GM12878 (cell line): ENCODE measurements at regions of chr20 and their contacts with region 1.

Region 1: GRCh38 chr20:18639501-18639979 is 51.7 kb downstream of the DTD1 start:
- DNase-seq: no peak
- ATAC-seq: peak; percentile 71
- H3K4me3 ChIP-seq: peak overlapping the region; percentile 59
- H3K27ac ChIP-seq: peak overlapping the region; percentile 6; the same call in 1 of the 2 replicates
- H3K4me1 ChIP-seq: peaks cover 9% of the 10 kb centered on the region
- H3K27me3 ChIP-seq: no peaks in the 10 kb centered on the region
- CTCF ChIP-seq: no peak
- EP300 ChIP-seq: no peak
- POLR2A ChIP-seq: no peak
- RAD21 ChIP-seq: no peak

Region 2: GRCh38 chr20:18793625-18794427 is 154.3 kb after region 1 on chr20:
- CTCF ChIA-PET with region 1: interaction called, 7 read pairs
- POLR2A ChIA-PET with region 1: interaction called, 4 read pairs
- RAD21 ChIA-PET with region 1: interaction called, 4 read pairs
- SMC1A ChIA-PET with region 1: interaction called, 8 read pairs
- in situ Hi-C with region 1: no loop called
- intact Hi-C with region 1: loop called (anchors 5 kb)
- DNase-seq: peak; percentile 84
- ATAC-seq: peak; percentile 96
- H3K4me3 ChIP-seq: peak overlapping the region; percentile 68
- H3K27ac ChIP-seq: peak overlapping the region; percentile 75
- H3K4me1 ChIP-seq: peaks cover 8% of the 10 kb centered on the region; the same call in 1 of the 2 replicates
- H3K27me3 ChIP-seq: no peaks in the 10 kb centered on the region
- CTCF ChIP-seq: peak; percentile 4 to 41 (median 17); a peak in 4 of 6 replicates
- EP300 ChIP-seq: no peak
- POLR2A ChIP-seq: peak; percentile 92
- RAD21 ChIP-seq: no peak